Activated naive CD4-positive, alpha-beta T cell treated with anti-CD3 and anti-CD28 coated beads, Interleukin-2, amount 10 ng/mL, durations not matched to agents 7 days and 5 days (primary cell): ENCODE measurements at regions of chr6 and their contacts with region 1.

Region 1: DNA sequence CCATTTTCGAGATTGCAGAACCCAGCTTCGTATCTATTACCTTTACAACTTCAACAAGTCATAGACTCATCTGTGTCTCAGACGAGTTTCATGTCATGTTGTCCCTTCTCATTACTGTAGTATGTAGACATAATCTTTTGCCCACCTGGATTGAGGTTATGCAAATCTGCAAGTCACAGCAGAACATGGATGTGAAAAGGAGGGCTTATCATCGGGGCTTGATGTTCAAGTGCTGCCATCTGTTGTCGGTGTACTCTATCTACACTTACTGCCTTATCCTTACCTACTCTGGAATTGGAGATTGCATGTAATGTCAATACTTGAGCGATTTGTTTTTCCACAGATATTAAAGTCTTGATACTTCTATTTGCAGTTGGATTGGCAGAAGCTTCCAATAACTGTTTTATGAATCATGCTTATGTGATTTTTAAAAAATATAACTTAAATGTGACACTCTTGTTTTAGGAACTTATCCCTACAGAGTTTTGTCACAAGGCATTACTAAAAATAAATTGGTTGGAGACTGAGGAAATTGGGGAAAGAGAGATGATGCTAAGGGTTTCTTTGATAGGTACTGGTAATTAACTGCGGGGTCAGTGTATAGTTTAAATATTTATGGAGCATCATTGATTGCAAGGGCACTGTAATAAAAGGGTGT is 3.0 kb upstream of the GOPC start:
- DNase-seq: peak; percentile 66
- H3K4me3 Mint-ChIP-seq: no peak overlapping the region
- H3K27ac Mint-ChIP-seq: no peak overlapping the region
- H3K4me1 Mint-ChIP-seq: peaks cover 19% of the 10 kb centered on the region
- H3K27me3 Mint-ChIP-seq: peaks cover 6% of the 10 kb centered on the region

Region 2: GRCh38 chr6:117449549-117450439 is 155.5 kb before region 1 on chr6:
- CTCF ChIA-PET with region 1: interaction called, 66 read pairs
- DNase-seq: peak; percentile 73
- H3K4me3 Mint-ChIP-seq: no peak overlapping the region
- H3K27ac Mint-ChIP-seq: no peak overlapping the region
- H3K4me1 Mint-ChIP-seq: no peaks in the 10 kb centered on the region
- H3K27me3 Mint-ChIP-seq: peaks cover 33% of the 10 kb centered on the region

Region 3: GRCh38 chr6:117482240-117483003 is 122.9 kb before region 1 on chr6 and contains the start of gene DCBLD1:
- CTCF ChIA-PET with region 1: interaction called, 18 read pairs
- DNase-seq: peak; percentile 78
- H3K4me3 Mint-ChIP-seq: peak within 1 kb of the TSS; percentile 87
- H3K27ac Mint-ChIP-seq: peak within 1 kb of the TSS; percentile 84
- H3K4me1 Mint-ChIP-seq: peaks cover 27% of the 10 kb centered on the region
- H3K27me3 Mint-ChIP-seq: peaks cover 59% of the 10 kb centered on the region

Region 4: DNA sequence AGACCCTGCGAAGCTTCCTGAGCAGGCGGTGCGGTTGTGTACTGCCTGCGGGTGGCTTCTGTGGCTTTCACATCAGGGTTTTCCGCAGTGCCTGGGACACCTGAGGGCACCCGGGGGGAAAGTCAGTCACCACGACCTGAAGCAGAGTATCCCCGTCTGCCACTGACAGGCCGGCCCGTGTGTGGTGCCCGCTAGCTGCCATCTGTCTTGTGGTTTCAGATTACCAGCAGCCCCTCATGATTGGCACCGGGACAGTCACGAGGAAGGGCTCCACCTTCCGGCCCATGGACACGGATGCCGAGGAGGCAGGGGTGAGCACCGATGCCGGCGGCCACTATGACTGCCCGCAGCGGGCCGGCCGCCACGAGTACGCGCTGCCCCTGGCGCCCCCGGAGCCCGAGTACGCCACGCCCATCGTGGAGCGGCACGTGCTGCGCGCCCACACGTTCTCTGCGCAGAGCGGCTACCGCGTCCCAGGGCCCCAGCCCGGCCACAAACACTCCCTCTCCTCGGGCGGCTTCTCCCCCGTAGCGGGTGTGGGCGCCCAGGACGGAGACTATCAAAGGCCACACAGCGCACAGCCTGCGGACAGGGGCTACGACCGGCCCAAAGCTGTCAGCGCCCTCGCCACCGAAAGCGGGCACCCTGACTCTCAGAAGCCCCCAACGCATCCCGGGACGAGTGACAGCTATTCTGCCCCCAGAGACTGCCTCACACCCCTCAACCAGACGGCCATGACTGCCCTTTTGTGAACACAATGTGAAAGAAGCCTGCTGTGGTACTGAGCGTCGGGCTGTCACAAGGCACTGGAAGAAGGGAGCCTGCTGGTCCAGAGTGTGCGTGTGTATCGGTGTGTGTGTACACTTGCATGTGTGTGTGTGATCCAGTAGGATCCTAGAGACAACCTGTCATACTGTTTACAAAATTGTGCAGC is 57.3 kb before region 1 on chr6:
- CTCF ChIA-PET with region 1: interaction called, 13 read pairs
- DNase-seq: peak; percentile 70
- H3K4me3 Mint-ChIP-seq: peak overlapping the region; percentile 74
- H3K27ac Mint-ChIP-seq: peak overlapping the region; percentile 97
- H3K4me1 Mint-ChIP-seq: peaks cover 44% of the 10 kb centered on the region
- H3K27me3 Mint-ChIP-seq: peaks cover 9% of the 10 kb centered on the region

Region 5: DNA sequence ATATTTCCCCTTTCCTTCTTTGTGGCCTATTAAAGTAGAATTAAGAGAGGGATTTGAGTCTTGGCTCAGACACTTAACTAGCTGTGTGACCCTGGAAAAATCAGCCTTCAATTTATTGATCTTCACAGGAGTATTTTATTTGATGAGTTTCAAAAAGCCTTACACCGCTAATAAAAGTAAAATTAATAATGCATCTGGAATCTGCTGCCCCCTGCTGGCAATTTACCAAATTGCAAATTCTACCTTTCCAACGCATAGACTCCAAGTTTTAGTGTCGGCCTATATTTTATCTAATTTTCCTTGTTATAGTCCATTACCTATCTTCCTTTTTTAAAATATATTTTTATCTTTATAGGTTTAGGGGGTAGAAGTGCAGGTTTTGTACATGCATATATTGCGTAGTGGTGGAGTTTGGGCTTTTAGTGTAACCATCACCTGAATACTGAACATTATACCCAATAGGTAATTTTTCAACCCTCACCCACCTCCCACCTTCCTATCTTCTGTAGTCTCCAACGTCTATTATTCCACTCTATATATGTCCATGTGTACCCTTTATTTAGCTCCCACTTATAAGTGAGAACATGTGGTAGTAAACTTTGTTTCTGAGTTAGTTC is 49.3 kb before region 1 on chr6:
- CTCF ChIA-PET with region 1: interaction called, 11 read pairs
- DNase-seq: peak; percentile 64
- H3K4me3 Mint-ChIP-seq: no peak overlapping the region
- H3K27ac Mint-ChIP-seq: no peak overlapping the region
- H3K4me1 Mint-ChIP-seq: peaks cover 1% of the 10 kb centered on the region
- H3K27me3 Mint-ChIP-seq: peaks cover 3% of the 10 kb centered on the region

Region 6: GRCh38 chr6:117674991-117675657 is 69.8 kb after region 1 on chr6 and contains the start of gene NUS1:
- CTCF ChIA-PET with region 1: no interaction called
- DNase-seq: peak; percentile 98
- H3K4me3 Mint-ChIP-seq: peak within 1 kb of the TSS; percentile 83
- H3K27ac Mint-ChIP-seq: peak within 1 kb of the TSS; percentile 87
- H3K4me1 Mint-ChIP-seq: peaks cover 44% of the 10 kb centered on the region
- H3K27me3 Mint-ChIP-seq: no peaks in the 10 kb centered on the region

Region 7: DNA sequence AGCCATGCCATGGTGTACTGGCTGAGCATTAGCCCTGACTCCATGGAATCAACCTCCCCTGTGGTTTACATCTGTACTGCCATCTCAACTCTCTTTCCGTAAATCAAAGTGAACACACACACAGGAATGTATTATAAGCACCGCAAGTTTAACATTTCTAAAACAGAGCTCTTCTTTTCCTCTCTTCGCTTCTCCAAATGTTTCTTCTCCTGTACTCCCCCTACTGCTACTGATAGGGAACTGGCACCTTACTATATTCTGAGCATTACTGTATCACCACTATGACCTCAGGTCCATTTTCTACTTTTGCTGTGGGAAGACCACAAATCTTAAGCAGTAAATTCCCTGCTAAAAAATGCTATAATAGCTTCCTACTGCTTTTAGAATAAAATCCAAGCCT is 171.1 kb after region 1 on chr6:
- CTCF ChIA-PET with region 1: no interaction called
- DNase-seq: no peak
- H3K4me3 Mint-ChIP-seq: no peak overlapping the region
- H3K27ac Mint-ChIP-seq: no peak overlapping the region
- H3K4me1 Mint-ChIP-seq: no peaks in the 10 kb centered on the region
- H3K27me3 Mint-ChIP-seq: no peaks in the 10 kb centered on the region